Pancreas (tissue), 10 donors: ENCODE measurements at regions of chr5 and their contacts with region 1.

Region 1: DNA sequence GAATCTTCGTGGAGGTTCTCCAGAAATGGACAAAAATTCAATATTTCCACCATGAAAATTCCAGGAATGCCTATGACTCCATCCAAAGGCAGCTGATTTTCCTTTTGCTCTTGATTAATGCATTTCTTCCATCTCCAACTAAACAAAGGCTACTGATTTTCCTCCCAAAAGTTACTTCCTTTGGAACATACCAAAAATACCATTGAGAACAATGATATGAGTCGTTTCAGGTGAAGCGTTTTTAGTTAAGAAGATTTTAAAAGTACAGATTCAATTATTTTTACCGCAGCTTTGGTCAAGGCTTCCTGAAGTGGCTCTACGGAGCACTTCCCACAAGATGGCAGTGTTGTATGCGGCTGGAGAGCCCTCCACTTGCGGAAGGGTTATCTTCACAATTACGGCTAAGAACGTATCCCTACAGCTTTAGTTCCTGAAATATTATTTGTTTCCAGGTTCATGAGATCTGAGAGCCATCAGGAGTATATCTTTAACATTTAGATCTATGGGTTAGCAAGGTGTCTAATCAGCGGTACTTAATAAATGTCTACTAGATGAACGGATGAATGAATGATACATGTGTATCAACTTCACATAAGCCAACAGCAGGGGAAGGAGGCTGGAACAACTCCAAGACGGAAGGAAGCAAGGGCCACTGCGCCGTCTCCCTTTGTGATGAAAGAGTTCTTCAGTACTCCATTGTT is 35.9 kb upstream of the ARSB start:
- DNase-seq: peak; percentile 29 to 63 (median 35)
- ATAC-seq: peak; percentile 82 to 95 (median 94)
- H3K4me3 ChIP-seq: peak overlapping the region in 2 of 4 donors; percentile 10 to 21
- H3K27ac ChIP-seq: no peak overlapping the region
- H3K4me1 ChIP-seq: no peaks in the 10 kb centered on the region
- H3K27me3 ChIP-seq: no peaks in the 10 kb centered on the region
- CTCF ChIP-seq: peak; percentile 53 to 68 (median 59)

Region 2: GRCh38 chr5:79120216-79120615 is 99.2 kb after region 1 on chr5:
- intact Hi-C with region 1: loop called in 1 of 3 experiments (anchors 5 kb)
- DNase-seq: no peak
- ATAC-seq: no peak
- H3K4me3 ChIP-seq: no peak overlapping the region
- H3K27ac ChIP-seq: no peak overlapping the region
- H3K4me1 ChIP-seq: no peaks in the 10 kb centered on the region
- H3K27me3 ChIP-seq: no peaks in the 10 kb centered on the region
- CTCF ChIP-seq: no peak

Region 3: GRCh38 chr5:79133657-79134451 is 112.8 kb after region 1 on chr5:
- intact Hi-C with region 1: loop called in 2 of 3 experiments (anchors 5 to 10 kb)
- DNase-seq: peak in 5 of 6 donors; percentile 43 to 74 (median 56)
- ATAC-seq: peak; percentile 91 to 96 (median 95)
- H3K4me3 ChIP-seq: peak overlapping the region in 1 of 4 donors; percentile 35
- H3K27ac ChIP-seq: peak overlapping the region in 2 of 4 donors; percentile 31 to 52
- H3K4me1 ChIP-seq: peaks cover 0 to 7% (median 3%) of the 10 kb centered on the region in 3 donors
- H3K27me3 ChIP-seq: no peaks in the 10 kb centered on the region
- CTCF ChIP-seq: peak; percentile 48 to 69 (median 52)

Region 4: GRCh38 chr5:79464695-79465332 is 443.8 kb after region 1 on chr5:
- intact Hi-C with region 1: loop called in 1 of 3 experiments (anchors 10 kb)
- DNase-seq: no peak
- ATAC-seq: peak; percentile 70 to 86 (median 81)
- H3K4me3 ChIP-seq: no peak overlapping the region
- H3K27ac ChIP-seq: no peak overlapping the region
- H3K4me1 ChIP-seq: no peaks in the 10 kb centered on the region
- H3K27me3 ChIP-seq: no peaks in the 10 kb centered on the region
- CTCF ChIP-seq: peak in 3 of 4 donors; percentile 16 to 53 (median 35)